ENCODE measurements at regions of chr2 and their contacts with region 1.

Region 1: GRCh38 chr2:241788572-241788971 is 11.9 kb downstream of the GAL3ST2 start:
- DNase-seq: peak; percentile 27
- H3K4me3 ChIP-seq: no peak overlapping the region
- H3K27ac ChIP-seq: no peak overlapping the region
- H3K4me1 ChIP-seq: no peaks in the 10 kb centered on the region
- H3K27me3 ChIP-seq: no peaks in the 10 kb centered on the region
- CTCF ChIP-seq: no peak

Region 2: GRCh38 chr2:241724259-241724974 is 64.2 kb before region 1 on chr2:
- CTCF ChIA-PET with region 1: no interaction called
- dilution Hi-C with region 1: loop called (anchors 5 kb)
- in situ Hi-C with region 1: no loop called
- intact Hi-C with region 1: no loop called
- DNase-seq: no peak
- H3K4me3 ChIP-seq: no peak overlapping the region
- H3K27ac ChIP-seq: no peak overlapping the region
- H3K4me1 ChIP-seq: no peaks in the 10 kb centered on the region
- H3K27me3 ChIP-seq: no peaks in the 10 kb centered on the region
- CTCF ChIP-seq: peak in 1 of 2 donors; percentile 35

Region 3: DNA sequence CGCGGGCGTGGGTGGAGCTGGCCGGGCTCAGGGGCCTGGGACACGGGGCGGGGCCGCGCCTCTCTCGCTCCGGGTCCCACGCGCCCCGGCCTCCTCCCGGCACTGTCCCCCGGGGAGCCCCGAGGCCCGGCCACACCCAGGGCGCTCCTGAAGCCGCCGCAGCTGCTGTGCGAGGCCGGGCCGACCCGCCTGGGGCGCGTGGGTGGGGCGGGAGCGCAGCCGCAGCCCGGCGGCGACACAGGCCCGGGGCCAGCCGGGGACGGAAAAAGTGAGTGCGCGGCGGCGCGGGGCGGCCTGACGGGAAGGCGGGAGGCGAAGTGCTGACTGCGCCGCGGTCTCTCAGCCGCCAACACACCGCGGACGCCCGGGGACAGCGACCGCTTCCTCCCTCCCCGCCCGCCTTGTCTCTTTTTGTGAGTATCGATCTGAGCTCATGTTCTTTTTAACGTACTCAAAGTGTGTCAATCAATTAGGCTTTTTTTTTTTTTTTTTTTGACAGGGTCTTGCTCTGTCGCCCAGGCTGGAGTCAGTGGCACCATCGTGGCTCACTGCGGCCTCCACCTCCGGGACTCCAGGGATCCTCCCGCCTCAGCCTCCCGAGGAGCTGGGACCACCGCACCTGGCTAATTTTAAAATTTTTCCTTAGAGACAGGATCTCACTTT is 55.6 kb after region 1 on chr2:
- CTCF ChIA-PET with region 1: no interaction called
- dilution Hi-C with region 1: no loop called
- in situ Hi-C with region 1: no loop called
- intact Hi-C with region 1: loop called (anchors 5 kb)
- DNase-seq: peak; percentile 33
- H3K4me3 ChIP-seq: peak overlapping the region in 1 of 3 experiments; percentile 9
- H3K27ac ChIP-seq: no peak overlapping the region
- H3K4me1 ChIP-seq: peaks cover 3% of the 10 kb centered on the region
- H3K27me3 ChIP-seq: peaks cover 4% of the 10 kb centered on the region
- CTCF ChIP-seq: no peak